Caco-2 (cell line): ENCODE measurements at regions of chr1 and their contacts with region 1.

Region 1: GRCh38 chr1:186125034-186125433 is 250.0 kb downstream of the TPR start:
- DNase-seq: no peak
- H3K4me3 ChIP-seq: no peak overlapping the region
- H3K4me3 Mint-ChIP-seq: no peak overlapping the region
- H3K27ac Mint-ChIP-seq: no peak overlapping the region
- H3K4me1 ChIP-seq: no peaks in the 10 kb centered on the region
- H3K4me1 Mint-ChIP-seq: no peaks in the 10 kb centered on the region
- H3K27me3 ChIP-seq: no peaks in the 10 kb centered on the region
- H3K27me3 Mint-ChIP-seq: peaks cover 13% of the 10 kb centered on the region
- CTCF ChIP-seq: no peak

Region 2: DNA sequence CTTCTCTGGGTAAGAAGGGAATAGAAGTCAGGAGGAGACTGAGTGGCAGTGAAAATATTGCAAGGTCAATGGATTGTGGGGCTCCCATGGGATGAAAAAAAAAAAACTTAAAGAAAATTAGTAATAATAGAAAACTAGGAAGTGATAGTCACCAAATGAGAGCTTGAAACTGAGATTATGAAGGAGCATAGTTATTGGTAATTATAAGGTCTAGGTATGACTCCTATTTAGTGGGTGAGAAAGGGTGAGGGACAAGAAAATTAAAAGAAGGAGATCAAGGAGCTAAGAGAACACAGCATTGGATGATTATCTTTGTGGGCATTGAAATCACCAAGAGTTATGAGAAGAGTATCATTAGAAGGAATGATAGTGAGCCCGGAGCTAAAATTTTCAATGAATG is 51.3 kb before region 1 on chr1:
- CTCF ChIA-PET with region 1: no interaction called
- POLR2A ChIA-PET with region 1: no interaction called
- intact Hi-C with region 1: loop called (anchors 2 kb)
- DNase-seq: no peak
- H3K4me3 ChIP-seq: no peak overlapping the region
- H3K4me3 Mint-ChIP-seq: no peak overlapping the region
- H3K27ac Mint-ChIP-seq: no peak overlapping the region
- H3K4me1 ChIP-seq: no peaks in the 10 kb centered on the region
- H3K4me1 Mint-ChIP-seq: no peaks in the 10 kb centered on the region
- H3K27me3 ChIP-seq: no peaks in the 10 kb centered on the region; the same call in 1 of the 2 replicates
- H3K27me3 Mint-ChIP-seq: no peaks in the 10 kb centered on the region
- CTCF ChIP-seq: no peak

Region 3: GRCh38 chr1:186139701-186140100 is 14.7 kb after region 1 on chr1:
- CTCF ChIA-PET with region 1: no interaction called
- POLR2A ChIA-PET with region 1: no interaction called
- intact Hi-C with region 1: no loop called
- DNase-seq: no peak
- H3K4me3 ChIP-seq: no peak overlapping the region
- H3K4me3 Mint-ChIP-seq: no peak overlapping the region
- H3K27ac Mint-ChIP-seq: no peak overlapping the region
- H3K4me1 ChIP-seq: no peaks in the 10 kb centered on the region
- H3K4me1 Mint-ChIP-seq: no peaks in the 10 kb centered on the region
- H3K27me3 ChIP-seq: no peaks in the 10 kb centered on the region
- H3K27me3 Mint-ChIP-seq: peaks cover 3% of the 10 kb centered on the region
- CTCF ChIP-seq: no peak